ENCODE measurements at regions of chr14 and their contacts with region 1.

Region 1: GRCh38 chr14:30558675-30559555 is at the start of gene G2E3:
- DNase-seq: peak; percentile 75 to 91 (median 85)
- ATAC-seq: peak; percentile 100
- H3K4me3 ChIP-seq: peak within 1 kb of the TSS; percentile 76
- H3K4me3 Mint-ChIP-seq: peak within 1 kb of the TSS; percentile 97 to 100 (median 99)
- H3K27ac ChIP-seq: peak within 1 kb of the TSS; percentile 77
- H3K27ac Mint-ChIP-seq: peak within 1 kb of the TSS; percentile 93 to 100 (median 98)
- H3K4me1 ChIP-seq: peaks cover 5 to 12% of the 10 kb centered on the region in 2 donors
- H3K4me1 Mint-ChIP-seq: peaks cover 24 to 43% (median 28%) of the 10 kb centered on the region in 7 donors
- H3K27me3 ChIP-seq: no peaks in the 10 kb centered on the region
- H3K27me3 Mint-ChIP-seq: peaks cover 0 to 4% (median 0%) of the 10 kb centered on the region in 5 donors
- total RNA-seq, gene G2E3: 25.0 to 29.7 (median 28.6) TPM

Region 2: GRCh38 chr14:30077946-30078345 is 481.0 kb before region 1 on chr14:
- CTCF ChIA-PET with region 1: no interaction called
- POLR2A ChIA-PET with region 1: no interaction called
- intact Hi-C with region 1: no loop called
- DNase-seq: no peak
- ATAC-seq: no peak
- H3K4me3 ChIP-seq: no peak overlapping the region
- H3K4me3 Mint-ChIP-seq: no peak overlapping the region
- H3K27ac ChIP-seq: no peak overlapping the region
- H3K27ac Mint-ChIP-seq: no peak overlapping the region
- H3K4me1 ChIP-seq: no peaks in the 10 kb centered on the region
- H3K4me1 Mint-ChIP-seq: no peaks in the 10 kb centered on the region
- H3K27me3 ChIP-seq: no peaks in the 10 kb centered on the region
- H3K27me3 Mint-ChIP-seq: no peaks in the 10 kb centered on the region

Region 3: DNA sequence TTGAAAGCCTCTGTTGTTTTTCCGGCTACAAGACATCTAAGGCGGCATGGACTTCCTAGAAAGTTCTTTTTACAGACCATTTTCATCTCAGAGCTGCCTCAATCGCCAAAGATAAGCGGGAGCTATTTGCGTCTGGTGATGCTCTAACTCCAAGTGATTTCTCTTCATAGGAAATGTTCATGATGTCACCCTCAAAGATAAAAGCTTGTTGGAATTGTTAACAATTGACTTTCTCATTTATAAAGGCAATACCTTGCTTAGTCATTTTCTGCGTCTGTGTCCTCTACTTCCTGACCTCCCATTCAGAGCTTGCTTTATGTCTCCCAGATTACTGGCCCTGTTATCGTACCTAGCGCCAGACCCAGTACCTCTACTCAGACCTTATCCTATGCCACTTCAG is 259.0 kb before region 1 on chr14:
- CTCF ChIA-PET with region 1: no interaction called
- POLR2A ChIA-PET with region 1: no interaction called
- intact Hi-C with region 1: no loop called
- DNase-seq: no peak
- ATAC-seq: no peak
- H3K4me3 ChIP-seq: no peak overlapping the region
- H3K4me3 Mint-ChIP-seq: no peak overlapping the region
- H3K27ac ChIP-seq: no peak overlapping the region
- H3K27ac Mint-ChIP-seq: no peak overlapping the region
- H3K4me1 ChIP-seq: no peaks in the 10 kb centered on the region
- H3K4me1 Mint-ChIP-seq: peaks cover 0 to 9% (median 3%) of the 10 kb centered on the region in 7 donors
- H3K27me3 ChIP-seq: no peaks in the 10 kb centered on the region
- H3K27me3 Mint-ChIP-seq: peaks cover 0 to 11% (median 9%) of the 10 kb centered on the region in 5 donors

Region 4: GRCh38 chr14:30573226-30573814 is 14.4 kb after region 1 on chr14:
- CTCF ChIA-PET with region 1: no interaction called
- POLR2A ChIA-PET with region 1: no interaction called
- intact Hi-C with region 1: loop called in 1 of 2 experiments (anchors 2 kb)
- DNase-seq: no peak
- ATAC-seq: no peak
- H3K4me3 ChIP-seq: no peak overlapping the region
- H3K4me3 Mint-ChIP-seq: no peak overlapping the region
- H3K27ac ChIP-seq: no peak overlapping the region
- H3K27ac Mint-ChIP-seq: no peak overlapping the region
- H3K4me1 ChIP-seq: peaks cover 6 to 9% of the 10 kb centered on the region in 2 donors
- H3K4me1 Mint-ChIP-seq: peaks cover 60 to 100% (median 93%) of the 10 kb centered on the region in 7 donors
- H3K27me3 ChIP-seq: no peaks in the 10 kb centered on the region
- H3K27me3 Mint-ChIP-seq: no peaks in the 10 kb centered on the region

Region 5: GRCh38 chr14:30638926-30639325 is 80.0 kb after region 1 on chr14:
- CTCF ChIA-PET with region 1: no interaction called
- POLR2A ChIA-PET with region 1: no interaction called
- intact Hi-C with region 1: no loop called
- DNase-seq: no peak
- ATAC-seq: no peak
- H3K4me3 ChIP-seq: no peak overlapping the region
- H3K4me3 Mint-ChIP-seq: no peak overlapping the region
- H3K27ac ChIP-seq: no peak overlapping the region
- H3K27ac Mint-ChIP-seq: peak overlapping the region in 1 of 9 donors; percentile 69
- H3K4me1 ChIP-seq: no peaks in the 10 kb centered on the region
- H3K4me1 Mint-ChIP-seq: peaks cover 0 to 20% (median 8%) of the 10 kb centered on the region in 7 donors
- H3K27me3 ChIP-seq: no peaks in the 10 kb centered on the region
- H3K27me3 Mint-ChIP-seq: no peaks in the 10 kb centered on the region

Region 6: GRCh38 chr14:31127690-31128089 is 568.8 kb after region 1 on chr14:
- CTCF ChIA-PET with region 1: no interaction called
- POLR2A ChIA-PET with region 1: no interaction called
- intact Hi-C with region 1: loop called in 1 of 2 experiments (anchors 2 kb)
- DNase-seq: peak in 5 of 9 donors; percentile 2 to 42 (median 27)
- ATAC-seq: peak; percentile 91
- H3K4me3 ChIP-seq: no peak overlapping the region
- H3K4me3 Mint-ChIP-seq: peak overlapping the region in 3 of 10 donors; percentile 7 to 67 (median 18)
- H3K27ac ChIP-seq: no peak overlapping the region
- H3K27ac Mint-ChIP-seq: peak overlapping the region in 5 of 9 donors; percentile 11 to 75 (median 52)
- H3K4me1 ChIP-seq: peaks cover 9 to 30% of the 10 kb centered on the region in 2 donors
- H3K4me1 Mint-ChIP-seq: peaks cover 16 to 47% (median 39%) of the 10 kb centered on the region in 7 donors
- H3K27me3 ChIP-seq: no peaks in the 10 kb centered on the region
- H3K27me3 Mint-ChIP-seq: peaks cover 0 to 2% (median 0%) of the 10 kb centered on the region in 5 donors

Region 7: DNA sequence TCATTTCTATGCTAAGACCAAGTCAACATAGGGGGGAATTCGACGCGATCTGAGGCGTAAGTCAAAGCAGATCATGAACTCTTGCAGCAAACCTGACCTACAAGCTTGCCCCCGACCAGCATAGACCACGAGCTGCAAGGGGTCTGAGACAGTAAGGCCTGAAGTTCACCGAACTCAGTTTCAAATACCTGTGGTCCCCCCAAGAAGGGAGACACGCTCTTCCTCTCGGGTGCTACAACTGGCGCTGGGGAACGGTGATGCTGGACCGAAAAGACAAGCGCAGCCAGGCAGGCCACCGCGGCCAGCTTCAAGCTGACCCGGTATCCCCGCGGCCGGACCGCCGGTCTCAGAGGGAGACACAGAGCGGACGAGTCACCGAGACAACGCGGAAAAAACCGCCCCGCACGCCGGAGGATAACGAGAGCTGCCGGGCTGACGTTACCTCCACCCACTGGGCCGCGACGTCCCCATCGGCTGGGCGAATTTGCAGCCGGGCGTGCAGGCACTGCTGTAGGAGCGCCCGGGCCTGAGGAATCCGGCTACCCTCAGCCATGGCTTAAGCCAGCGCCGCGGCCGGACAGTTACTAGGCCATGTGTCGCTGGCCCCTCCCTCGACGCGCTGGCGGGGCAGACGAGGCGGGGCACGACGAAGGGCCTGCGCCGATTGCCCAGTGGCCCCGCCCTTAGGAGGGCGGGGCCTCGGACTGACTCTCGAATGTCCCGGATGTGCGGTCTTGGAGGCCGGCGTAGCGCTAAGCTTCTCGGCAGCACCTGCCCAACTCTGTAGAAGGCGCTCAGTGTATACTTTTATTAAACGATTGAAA is 898.1 kb after region 1 on chr14 and contains the start of gene DTD2:
- CTCF ChIA-PET with region 1: no interaction called
- POLR2A ChIA-PET with region 1: no interaction called
- intact Hi-C with region 1: loop called (anchors 1 to 2 kb)
- DNase-seq: peak; percentile 80 to 89 (median 86)
- ATAC-seq: peak; percentile 99
- H3K4me3 ChIP-seq: peak within 1 kb of the TSS; percentile 82
- H3K4me3 Mint-ChIP-seq: peak within 1 kb of the TSS; percentile 92 to 98 (median 96)
- H3K27ac ChIP-seq: peak within 1 kb of the TSS; percentile 77
- H3K27ac Mint-ChIP-seq: peak within 1 kb of the TSS; percentile 89 to 98 (median 95)
- H3K4me1 ChIP-seq: peaks cover 6% of the 10 kb centered on the region in 2 donors
- H3K4me1 Mint-ChIP-seq: peaks cover 14 to 48% (median 40%) of the 10 kb centered on the region in 7 donors
- H3K27me3 ChIP-seq: no peaks in the 10 kb centered on the region
- H3K27me3 Mint-ChIP-seq: peaks cover 0 to 5% (median 0%) of the 10 kb centered on the region in 5 donors
- total RNA-seq, gene DTD2: 13.4 to 20.2 (median 18.6) TPM

Region 8: DNA sequence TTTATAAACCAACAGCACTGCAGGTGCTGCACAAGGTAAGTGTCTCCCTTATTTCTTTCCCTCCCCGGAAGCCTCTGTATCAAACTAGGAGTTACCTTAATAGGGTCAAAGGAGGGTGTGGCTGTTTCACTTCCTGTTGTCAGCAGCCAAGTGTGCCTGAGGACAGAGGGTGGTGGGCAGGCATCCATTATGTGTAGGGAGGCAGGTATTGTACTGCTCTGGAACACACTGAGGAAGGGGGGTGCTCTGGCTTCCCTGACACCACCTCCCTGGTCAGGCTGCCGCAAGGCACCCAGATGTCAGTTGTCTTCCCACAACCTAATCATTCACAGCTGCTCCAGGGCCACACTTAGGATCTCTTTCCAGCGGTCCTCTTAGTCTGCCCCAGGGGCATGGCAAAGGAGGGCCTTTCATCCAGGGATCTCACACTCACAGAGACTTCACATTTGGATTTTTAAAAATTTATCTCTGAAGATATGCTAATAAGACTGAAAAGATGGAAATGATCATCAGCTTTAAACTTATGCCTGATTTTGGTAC is 1386.2 kb after region 1 on chr14:
- CTCF ChIA-PET with region 1: no interaction called
- POLR2A ChIA-PET with region 1: no interaction called
- intact Hi-C with region 1: loop called in 1 of 2 experiments (anchors 2 kb)
- DNase-seq: peak in 8 of 9 donors; percentile 7 to 75 (median 48)
- ATAC-seq: peak; percentile 83
- H3K4me3 ChIP-seq: peak overlapping the region; percentile 29
- H3K4me3 Mint-ChIP-seq: peak overlapping the region in 9 of 10 donors; percentile 30 to 84 (median 71)
- H3K27ac ChIP-seq: peak overlapping the region; percentile 56
- H3K27ac Mint-ChIP-seq: peak overlapping the region; percentile 62 to 94 (median 90)
- H3K4me1 ChIP-seq: peaks cover 10 to 28% of the 10 kb centered on the region in 2 donors
- H3K4me1 Mint-ChIP-seq: peaks cover 21 to 64% (median 33%) of the 10 kb centered on the region in 7 donors
- H3K27me3 ChIP-seq: no peaks in the 10 kb centered on the region
- H3K27me3 Mint-ChIP-seq: peaks cover 0 to 4% (median 0%) of the 10 kb centered on the region in 5 donors